Activated naive CD4-positive, alpha-beta T cell treated with anti-CD3 and anti-CD28 coated beads, Interleukin-2, amount 10 ng/mL, durations not matched to agents 7 days and 5 days (primary cell): ENCODE measurements at regions of chrX and their contacts with region 1.

Region 1: DNA sequence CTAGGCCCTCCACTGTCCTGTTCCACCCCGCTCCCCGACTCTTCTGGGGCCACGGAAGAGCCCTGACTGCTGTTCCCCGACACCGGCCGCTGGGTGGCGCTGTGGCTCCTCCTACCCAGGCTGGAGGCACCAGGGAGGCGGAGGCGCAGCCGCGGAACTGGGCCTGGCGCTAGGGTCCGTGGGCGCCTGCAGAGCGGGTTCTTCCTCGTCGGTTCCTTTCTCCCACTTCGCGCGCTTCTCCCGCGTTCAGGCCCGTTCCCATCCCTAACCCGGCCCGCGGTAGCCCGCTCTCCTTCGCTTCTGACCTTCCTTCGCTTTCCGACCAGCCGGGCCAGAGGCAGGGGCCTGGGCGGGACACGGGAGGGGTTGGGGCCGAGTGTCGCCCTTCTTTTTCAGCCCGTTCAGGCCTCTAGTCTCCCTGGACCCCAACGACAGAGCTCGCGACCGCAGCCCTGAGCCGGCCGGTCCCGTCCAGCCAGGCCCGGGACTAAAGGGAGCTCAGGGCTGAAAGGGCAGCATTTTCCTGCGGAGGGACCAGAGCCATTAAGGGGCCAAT is 34.3 kb downstream of the NALF2 start:
- DNase-seq: peak; percentile 83
- H3K4me3 Mint-ChIP-seq: no peak overlapping the region
- H3K27ac Mint-ChIP-seq: no peak overlapping the region
- H3K4me1 Mint-ChIP-seq: peaks cover 21% of the 10 kb centered on the region
- H3K27me3 Mint-ChIP-seq: peaks cover 9% of the 10 kb centered on the region

Region 2: DNA sequence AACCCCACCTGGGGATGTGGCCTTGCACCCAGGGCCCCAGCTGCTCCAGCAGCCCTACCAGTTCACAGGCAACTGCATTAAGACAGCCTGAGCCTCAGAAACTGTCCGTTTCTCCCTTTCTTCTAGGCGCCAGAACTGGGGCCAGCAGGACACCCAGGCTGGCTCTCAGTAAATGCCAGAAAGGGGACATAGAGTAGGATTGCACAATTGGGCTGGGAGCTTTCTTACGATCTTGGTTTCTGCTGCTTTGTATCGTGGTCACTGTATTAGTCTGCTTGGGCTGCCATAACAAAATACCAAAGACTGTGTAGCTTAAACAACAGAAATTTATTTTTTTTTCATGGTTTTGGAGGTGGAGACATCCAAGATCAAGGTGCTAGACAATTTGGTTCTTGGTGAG is 14.1 kb after region 1 on chrX:
- CTCF ChIA-PET with region 1: interaction called, 11 read pairs
- DNase-seq: no peak
- H3K4me3 Mint-ChIP-seq: no peak overlapping the region
- H3K27ac Mint-ChIP-seq: no peak overlapping the region
- H3K4me1 Mint-ChIP-seq: no peaks in the 10 kb centered on the region
- H3K27me3 Mint-ChIP-seq: peaks cover 4% of the 10 kb centered on the region

Region 3: GRCh38 chrX:69562904-69563578 is 24.6 kb after region 1 on chrX:
- CTCF ChIA-PET with region 1: no interaction called
- DNase-seq: no peak
- H3K4me3 Mint-ChIP-seq: no peak overlapping the region
- H3K27ac Mint-ChIP-seq: no peak overlapping the region
- H3K4me1 Mint-ChIP-seq: no peaks in the 10 kb centered on the region
- H3K27me3 Mint-ChIP-seq: no peaks in the 10 kb centered on the region

Region 4: DNA sequence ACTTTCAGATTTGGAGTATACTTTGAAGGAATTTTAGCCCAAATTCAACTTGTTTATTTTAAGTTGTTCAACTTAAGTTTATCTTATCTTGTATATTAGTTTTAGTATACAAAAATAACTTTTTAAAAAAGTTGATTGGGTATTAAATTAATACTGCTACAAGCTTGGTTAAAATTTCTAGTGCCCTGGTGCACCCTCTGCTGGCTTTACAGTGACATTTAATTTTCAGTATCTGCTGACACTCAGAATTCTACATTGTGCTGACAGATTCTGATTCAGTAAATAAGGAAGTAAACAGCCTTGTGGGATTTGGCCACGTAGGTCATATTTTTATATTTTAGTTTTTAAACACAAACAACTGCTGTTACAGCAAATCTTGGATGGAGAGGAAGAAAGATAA is 80.4 kb after region 1 on chrX:
- CTCF ChIA-PET with region 1: interaction called, 10 read pairs
- DNase-seq: peak; percentile 39
- H3K4me3 Mint-ChIP-seq: peak overlapping the region; percentile 33
- H3K27ac Mint-ChIP-seq: no peak overlapping the region
- H3K4me1 Mint-ChIP-seq: peaks cover 39% of the 10 kb centered on the region
- H3K27me3 Mint-ChIP-seq: peaks cover 13% of the 10 kb centered on the region

Region 5: DNA sequence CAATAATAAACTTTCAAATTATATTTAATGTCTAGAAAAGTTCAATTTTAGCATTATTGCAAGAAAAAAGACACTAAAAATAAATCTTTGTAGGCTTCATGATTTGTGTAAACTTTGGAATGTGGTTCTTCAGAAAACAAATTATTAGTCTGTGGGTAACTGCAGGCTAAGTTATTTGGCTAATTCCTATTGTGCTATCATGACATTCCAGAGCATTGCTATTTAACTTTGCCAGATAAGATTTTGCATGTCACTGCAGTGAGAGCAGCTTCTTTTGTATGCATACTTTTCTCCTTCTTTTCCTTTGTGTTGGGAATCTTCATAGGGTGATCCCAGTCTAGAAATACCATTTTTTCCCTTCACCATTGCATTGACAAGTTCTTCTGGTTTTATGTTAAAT is 381.4 kb after region 1 on chrX:
- CTCF ChIA-PET with region 1: no interaction called
- DNase-seq: no peak
- H3K4me3 Mint-ChIP-seq: no peak overlapping the region
- H3K27ac Mint-ChIP-seq: no peak overlapping the region
- H3K4me1 Mint-ChIP-seq: no peaks in the 10 kb centered on the region
- H3K27me3 Mint-ChIP-seq: no peaks in the 10 kb centered on the region

Region 6: GRCh38 chrX:70030301-70030767 is 491.9 kb after region 1 on chrX:
- CTCF ChIA-PET with region 1: interaction called, 29 read pairs
- DNase-seq: peak; percentile 63
- H3K4me3 Mint-ChIP-seq: no peak overlapping the region
- H3K27ac Mint-ChIP-seq: no peak overlapping the region
- H3K4me1 Mint-ChIP-seq: peaks cover 71% of the 10 kb centered on the region
- H3K27me3 Mint-ChIP-seq: no peaks in the 10 kb centered on the region

Region 7: GRCh38 chrX:70096052-70096451 is 557.7 kb after region 1 on chrX:
- CTCF ChIA-PET with region 1: interaction called, 12 read pairs
- DNase-seq: peak; percentile 28
- H3K4me3 Mint-ChIP-seq: no peak overlapping the region
- H3K27ac Mint-ChIP-seq: no peak overlapping the region
- H3K4me1 Mint-ChIP-seq: peaks cover 2% of the 10 kb centered on the region
- H3K27me3 Mint-ChIP-seq: peaks cover 12% of the 10 kb centered on the region